ENCODE measurements at regions of chr1 and their contacts with region 1.

Region 1: DNA sequence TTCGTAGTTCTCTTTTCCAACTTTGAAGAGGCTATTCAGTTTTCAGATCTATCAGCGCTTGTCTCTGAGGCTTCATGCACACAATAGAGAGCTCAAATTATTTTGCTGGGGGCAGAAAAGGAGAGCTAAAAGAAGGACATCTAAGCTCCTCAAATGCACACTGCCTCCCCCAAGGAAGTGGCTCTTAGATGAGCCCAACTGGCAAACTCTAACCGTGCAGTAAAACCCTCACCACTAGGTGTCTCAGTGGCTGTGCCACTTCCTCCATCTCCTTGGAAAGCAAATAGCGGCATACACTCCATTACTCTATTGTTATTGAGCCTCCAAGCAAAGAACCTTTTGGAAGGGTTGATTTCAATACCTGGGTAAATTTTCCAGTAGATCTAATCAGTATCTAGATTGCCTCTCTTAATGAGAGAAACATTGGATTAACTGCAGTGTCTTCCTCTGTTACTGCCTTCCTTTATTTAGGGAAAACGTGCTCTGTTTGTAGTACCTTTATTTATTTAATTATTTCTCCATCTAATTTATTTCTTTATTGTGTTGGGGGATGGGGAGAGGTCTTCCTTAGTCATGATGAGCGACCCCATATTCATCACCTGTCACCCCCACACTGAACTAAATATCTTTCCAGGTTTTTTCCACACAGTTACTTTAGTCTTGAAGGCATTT is 9.2 kb upstream of the SFPQ start:
- DNase-seq: peak; percentile 68 to 78 (median 71)
- H3K4me3 ChIP-seq: no peak overlapping the region
- H3K4me3 Mint-ChIP-seq: no peak overlapping the region
- H3K27ac ChIP-seq: no peak overlapping the region
- H3K27ac Mint-ChIP-seq: no peak overlapping the region
- H3K4me1 ChIP-seq: no peaks in the 10 kb centered on the region
- H3K4me1 Mint-ChIP-seq: peaks cover 3% of the 10 kb centered on the region
- H3K27me3 ChIP-seq: no peaks in the 10 kb centered on the region
- H3K27me3 Mint-ChIP-seq: peaks cover under 1 to 2% (median 2%) of the 10 kb centered on the region in 3 donors
- CTCF ChIP-seq: peak; percentile 93

Region 2: GRCh38 chr1:35173909-35174540 is 28.2 kb before region 1 on chr1:
- intact Hi-C with region 1: no loop called
- DNase-seq: no peak
- H3K4me3 ChIP-seq: no peak overlapping the region
- H3K4me3 Mint-ChIP-seq: no peak overlapping the region
- H3K27ac ChIP-seq: no peak overlapping the region
- H3K27ac Mint-ChIP-seq: peak overlapping the region in 1 of 7 donors; percentile 63
- H3K4me1 ChIP-seq: no peaks in the 10 kb centered on the region
- H3K4me1 Mint-ChIP-seq: no peaks in the 10 kb centered on the region
- H3K27me3 ChIP-seq: no peaks in the 10 kb centered on the region
- H3K27me3 Mint-ChIP-seq: no peaks in the 10 kb centered on the region
- CTCF ChIP-seq: no peak

Region 3: GRCh38 chr1:35298464-35298863 is 96.3 kb after region 1 on chr1:
- intact Hi-C with region 1: loop called (anchors 2 to 5 kb)
- DNase-seq: peak; percentile 18 to 47 (median 44)
- H3K4me3 ChIP-seq: no peak overlapping the region
- H3K4me3 Mint-ChIP-seq: no peak overlapping the region
- H3K27ac ChIP-seq: peak overlapping the region in 1 of 2 donors; percentile 21
- H3K27ac Mint-ChIP-seq: peak overlapping the region in 4 of 7 donors; percentile 21 to 75 (median 52)
- H3K4me1 ChIP-seq: no peaks in the 10 kb centered on the region
- H3K4me1 Mint-ChIP-seq: peaks cover 4% of the 10 kb centered on the region
- H3K27me3 ChIP-seq: no peaks in the 10 kb centered on the region
- H3K27me3 Mint-ChIP-seq: no peaks in the 10 kb centered on the region
- CTCF ChIP-seq: peak; percentile 53

Region 4: DNA sequence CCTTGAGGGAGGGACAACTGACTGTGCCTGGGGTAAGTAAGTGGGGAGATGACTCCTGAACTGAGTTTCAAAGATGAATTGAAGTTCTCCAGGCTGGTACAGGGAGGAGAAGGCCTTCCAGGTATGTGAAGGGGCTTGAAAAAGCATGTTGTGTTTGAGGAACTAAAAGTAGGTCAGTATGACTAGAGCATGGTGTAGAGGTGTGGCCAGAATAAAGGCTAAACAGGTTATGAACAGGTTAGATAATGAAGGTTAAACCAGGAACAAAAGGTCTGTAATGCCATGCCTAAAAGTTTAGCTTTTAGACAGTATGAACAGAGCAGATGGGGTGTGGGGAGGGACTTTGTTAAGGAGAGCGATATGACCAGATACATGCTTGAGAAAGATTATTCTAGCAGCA is 574.9 kb after region 1 on chr1:
- intact Hi-C with region 1: no loop called
- DNase-seq: no peak
- H3K4me3 ChIP-seq: no peak overlapping the region
- H3K4me3 Mint-ChIP-seq: no peak overlapping the region
- H3K27ac ChIP-seq: no peak overlapping the region
- H3K27ac Mint-ChIP-seq: peak overlapping the region in 2 of 7 donors; percentile 10 to 58
- H3K4me1 ChIP-seq: peaks cover 0 to 5% of the 10 kb centered on the region in 2 donors
- H3K4me1 Mint-ChIP-seq: peaks cover 12% of the 10 kb centered on the region
- H3K27me3 ChIP-seq: no peaks in the 10 kb centered on the region
- H3K27me3 Mint-ChIP-seq: peaks cover 0 to 2% (median 2%) of the 10 kb centered on the region in 3 donors
- CTCF ChIP-seq: no peak